ENCODE measurements at regions of chr18 and their contacts with region 1.

Region 1: DNA sequence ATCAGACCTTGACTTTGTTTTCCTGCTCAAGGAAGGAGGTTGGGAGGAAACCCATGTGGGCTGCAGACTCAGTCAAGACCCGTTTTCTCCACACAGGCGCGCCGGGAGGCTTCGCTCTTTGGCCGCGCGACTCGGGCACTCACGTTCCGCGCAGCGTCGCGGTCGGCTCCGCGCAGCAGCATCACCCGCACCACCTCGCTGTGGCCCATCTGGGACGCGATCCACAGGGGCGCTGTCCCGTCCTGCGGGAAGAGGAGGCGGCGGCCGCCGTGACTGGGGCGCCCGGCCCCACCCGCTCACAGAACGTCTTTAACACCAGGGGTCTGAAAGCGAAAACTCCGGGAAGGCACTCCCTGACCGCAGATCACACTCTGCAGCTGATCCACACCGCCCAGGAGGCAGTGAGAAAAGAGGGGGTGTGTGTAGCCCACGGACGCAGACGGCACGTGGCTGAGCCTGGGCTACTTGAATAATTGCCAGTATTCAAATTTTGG is 33.1 kb upstream of the NPC1 start:
- DNase-seq: peak; percentile 23
- H3K4me3 Mint-ChIP-seq: peak overlapping the region; percentile 40
- H3K27ac Mint-ChIP-seq: no peak overlapping the region
- H3K4me1 Mint-ChIP-seq: peaks cover 8% of the 10 kb centered on the region
- H3K27me3 Mint-ChIP-seq: peaks cover 59% of the 10 kb centered on the region

Region 2: GRCh38 chr18:23593720-23594119 is 25.7 kb before region 1 on chr18:
- CTCF ChIA-PET with region 1: no interaction called
- DNase-seq: no peak
- H3K4me3 Mint-ChIP-seq: no peak overlapping the region
- H3K27ac Mint-ChIP-seq: no peak overlapping the region
- H3K4me1 Mint-ChIP-seq: peaks cover 6% of the 10 kb centered on the region
- H3K27me3 Mint-ChIP-seq: peaks cover 40% of the 10 kb centered on the region

Region 3: DNA sequence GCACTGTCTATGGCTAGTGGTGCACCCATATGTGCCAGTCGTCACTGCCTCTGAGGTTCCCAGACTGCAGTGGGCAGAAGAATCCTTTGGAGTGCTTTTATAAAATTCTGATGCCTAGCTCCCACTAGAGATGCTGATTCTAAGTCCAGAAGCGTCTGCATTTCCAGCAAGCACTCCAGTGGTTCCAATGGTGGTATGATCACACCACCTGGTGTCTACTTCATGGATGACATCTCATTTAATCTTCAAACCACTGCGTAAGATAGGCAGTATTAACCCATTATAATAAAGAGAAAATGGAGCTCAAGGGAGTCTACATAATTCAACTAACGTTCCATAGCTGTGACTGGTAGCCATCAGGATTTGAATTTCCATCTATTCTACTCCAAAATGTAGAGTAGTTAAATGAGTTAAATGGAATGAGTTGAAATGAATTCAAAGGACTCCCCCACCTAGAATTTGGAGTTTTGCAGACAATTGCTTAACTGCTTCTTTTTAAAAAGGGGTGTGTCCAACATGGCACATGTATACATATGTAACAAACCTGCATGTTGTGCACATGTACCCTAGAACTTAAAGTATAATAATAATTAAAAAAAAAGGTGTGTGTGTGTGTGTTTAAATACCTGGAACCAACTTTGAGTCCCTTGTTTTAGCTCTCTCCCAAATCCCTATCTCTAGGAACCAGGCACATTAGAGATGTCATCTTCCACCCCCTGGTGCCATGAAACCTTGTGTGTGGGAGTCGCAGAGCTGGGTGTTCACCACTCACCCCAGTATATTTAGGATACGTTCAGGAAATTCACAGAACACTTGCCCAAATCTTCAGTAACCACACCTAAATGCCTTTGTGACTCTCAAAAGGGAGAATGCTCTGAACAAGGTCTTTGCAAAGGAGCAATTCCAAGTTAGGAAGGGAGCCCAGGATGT is 83.9 kb after region 1 on chr18:
- CTCF ChIA-PET with region 1: interaction called, 29 read pairs
- DNase-seq: peak; percentile 44
- H3K4me3 Mint-ChIP-seq: no peak overlapping the region
- H3K27ac Mint-ChIP-seq: no peak overlapping the region
- H3K4me1 Mint-ChIP-seq: no peaks in the 10 kb centered on the region
- H3K27me3 Mint-ChIP-seq: peaks cover 42% of the 10 kb centered on the region

Region 4: GRCh38 chr18:23812546-23813440 is 193.4 kb after region 1 on chr18:
- CTCF ChIA-PET with region 1: interaction called, 23 read pairs
- DNase-seq: no peak
- H3K4me3 Mint-ChIP-seq: no peak overlapping the region
- H3K27ac Mint-ChIP-seq: no peak overlapping the region
- H3K4me1 Mint-ChIP-seq: peaks cover 26% of the 10 kb centered on the region
- H3K27me3 Mint-ChIP-seq: peaks cover 45% of the 10 kb centered on the region

Measured in activated naive CD4-positive, alpha-beta T cell treated with anti-CD3 and anti-CD28 coated beads, Interleukin-2, amount 10 ng/mL, durations not matched to agents 7 days and 5 days (primary cell).